ENCODE measurements at regions of chr1 and their contacts with region 1.

Region 1: DNA sequence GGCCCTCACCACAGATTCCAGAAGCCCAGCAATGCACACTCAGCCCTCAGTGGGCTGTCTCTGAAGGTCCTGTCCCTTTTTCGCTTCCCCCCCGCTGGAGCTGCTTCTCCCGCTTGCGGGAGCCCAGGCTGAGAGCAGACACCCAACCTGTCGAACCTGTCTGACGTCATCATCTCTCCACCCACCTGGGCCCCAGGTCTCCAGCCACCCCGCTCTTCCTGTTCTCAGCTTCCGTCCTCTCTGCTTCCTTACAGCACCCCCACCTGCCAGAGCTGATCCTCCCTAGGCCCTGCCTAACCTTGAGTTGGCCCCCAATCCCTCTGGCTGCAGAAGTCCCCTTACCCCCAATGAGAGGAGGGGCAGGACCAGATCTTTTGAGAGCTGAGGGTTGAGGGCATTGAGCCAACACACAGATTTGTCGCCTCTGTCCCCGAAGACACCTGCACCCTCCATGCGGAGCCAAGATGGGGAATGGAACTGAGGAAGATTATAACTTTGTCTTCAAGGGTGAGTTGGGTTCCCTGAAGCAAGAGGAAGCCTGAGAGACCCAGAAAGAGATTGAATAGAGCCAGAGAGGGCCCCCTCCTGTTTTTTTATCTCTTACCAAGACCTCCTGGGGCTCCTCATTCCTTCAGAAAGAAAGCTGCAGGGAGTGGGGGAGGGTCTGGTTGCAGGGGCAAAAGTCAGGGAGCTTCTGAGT is at the start of gene RAB25:
- DNase-seq: no peak
- H3K4me3 Mint-ChIP-seq: no peak within 1 kb of the TSS
- H3K27ac Mint-ChIP-seq: no peak within 1 kb of the TSS
- H3K4me1 Mint-ChIP-seq: peaks cover 12% of the 10 kb centered on the region
- H3K27me3 Mint-ChIP-seq: no peaks in the 10 kb centered on the region
- total RNA-seq, gene RAB25: 0.18 and 0.21 TPM in 2 replicates

Region 2: GRCh38 chr1:156001682-156002171 is 59.4 kb before region 1 on chr1:
- intact Hi-C with region 1: loop called (anchors 10 kb)
- DNase-seq: no peak
- H3K4me3 Mint-ChIP-seq: no peak overlapping the region
- H3K27ac Mint-ChIP-seq: no peak overlapping the region
- H3K4me1 Mint-ChIP-seq: peaks cover 17% of the 10 kb centered on the region
- H3K27me3 Mint-ChIP-seq: no peaks in the 10 kb centered on the region

Region 3: GRCh38 chr1:156146020-156146768 is 85.1 kb after region 1 on chr1:
- intact Hi-C with region 1: no loop called
- DNase-seq: peak; percentile 35
- H3K4me3 Mint-ChIP-seq: peak overlapping the region; percentile 18
- H3K27ac Mint-ChIP-seq: peak overlapping the region; percentile 76
- H3K4me1 Mint-ChIP-seq: peaks cover 36% of the 10 kb centered on the region
- H3K27me3 Mint-ChIP-seq: no peaks in the 10 kb centered on the region